ENCODE measurements at regions of chr5 and their contacts with region 1.

Region 1: GRCh38 chr5:169583424-169584204 is at the start of gene SPDL1:
- DNase-seq: peak; percentile 86 to 95 (median 93)
- ATAC-seq: peak; percentile 97
- H3K4me3 ChIP-seq: peak within 1 kb of the TSS; percentile 93
- H3K4me3 Mint-ChIP-seq: peak within 1 kb of the TSS; percentile 93 to 99 (median 98)
- H3K27ac ChIP-seq: peak within 1 kb of the TSS; percentile 83
- H3K27ac Mint-ChIP-seq: peak within 1 kb of the TSS; percentile 86 to 97 (median 91)
- H3K4me1 ChIP-seq: peaks cover 6% of the 10 kb centered on the region in 2 donors
- H3K4me1 Mint-ChIP-seq: peaks cover 9 to 47% (median 40%) of the 10 kb centered on the region in 7 donors
- H3K27me3 ChIP-seq: no peaks in the 10 kb centered on the region
- H3K27me3 Mint-ChIP-seq: peaks cover 0 to 15% (median 0%) of the 10 kb centered on the region in 5 donors
- total RNA-seq, gene SPDL1: 9.9 to 27.2 (median 13.6) TPM

Region 2: GRCh38 chr5:168268949-168269943 is 1314.4 kb before region 1 on chr5:
- CTCF ChIA-PET with region 1: no interaction called
- POLR2A ChIA-PET with region 1: no interaction called
- intact Hi-C with region 1: loop called (anchors 1 to 5 kb)
- DNase-seq: peak; percentile 11 to 74 (median 40)
- ATAC-seq: peak; percentile 85
- H3K4me3 ChIP-seq: no peak overlapping the region
- H3K4me3 Mint-ChIP-seq: peak overlapping the region in 9 of 10 donors; percentile 34 to 82 (median 55)
- H3K27ac ChIP-seq: no peak overlapping the region
- H3K27ac Mint-ChIP-seq: no peak overlapping the region
- H3K4me1 ChIP-seq: peaks cover 0 to 7% of the 10 kb centered on the region in 2 donors
- H3K4me1 Mint-ChIP-seq: peaks cover 6 to 15% (median 10%) of the 10 kb centered on the region in 7 donors
- H3K27me3 ChIP-seq: no peaks in the 10 kb centered on the region
- H3K27me3 Mint-ChIP-seq: peaks cover 0 to 21% (median 15%) of the 10 kb centered on the region in 5 donors

Region 3: GRCh38 chr5:168464214-168464613 is 1119.4 kb before region 1 on chr5:
- CTCF ChIA-PET with region 1: no interaction called
- POLR2A ChIA-PET with region 1: no interaction called
- intact Hi-C with region 1: no loop called
- DNase-seq: no peak
- ATAC-seq: no peak
- H3K4me3 ChIP-seq: no peak overlapping the region
- H3K4me3 Mint-ChIP-seq: no peak overlapping the region
- H3K27ac ChIP-seq: no peak overlapping the region
- H3K27ac Mint-ChIP-seq: no peak overlapping the region
- H3K4me1 ChIP-seq: no peaks in the 10 kb centered on the region
- H3K4me1 Mint-ChIP-seq: peaks cover 0 to 6% (median 0%) of the 10 kb centered on the region in 7 donors
- H3K27me3 ChIP-seq: no peaks in the 10 kb centered on the region
- H3K27me3 Mint-ChIP-seq: no peaks in the 10 kb centered on the region

Region 4: DNA sequence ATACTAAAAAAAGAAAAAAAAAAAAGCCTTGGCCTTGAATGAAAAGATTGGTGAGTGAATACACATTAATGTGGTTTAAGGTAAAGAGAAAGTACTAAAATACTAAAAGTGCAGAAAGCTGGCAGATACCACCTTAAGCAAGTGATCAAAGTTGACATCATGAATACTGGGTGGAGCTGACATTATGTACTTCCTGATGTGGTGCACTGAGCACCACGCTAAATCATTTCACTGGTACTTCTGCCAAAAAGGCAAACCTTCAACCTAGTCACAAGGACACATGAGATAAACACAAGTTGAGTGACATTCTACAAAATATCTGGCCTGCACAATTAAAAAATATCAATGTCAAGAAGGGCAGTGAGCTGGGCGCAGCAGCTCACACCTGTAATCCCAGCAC is 970.6 kb before region 1 on chr5:
- CTCF ChIA-PET with region 1: no interaction called
- POLR2A ChIA-PET with region 1: no interaction called
- intact Hi-C with region 1: loop called in 1 of 2 experiments (anchors 1 kb)
- DNase-seq: peak in 7 of 9 donors; percentile 25 to 61 (median 55)
- ATAC-seq: peak; percentile 98
- H3K4me3 ChIP-seq: peak overlapping the region; percentile 19
- H3K4me3 Mint-ChIP-seq: peak overlapping the region in 8 of 10 donors; percentile 33 to 83 (median 68)
- H3K27ac ChIP-seq: peak overlapping the region; percentile 47
- H3K27ac Mint-ChIP-seq: peak overlapping the region in 8 of 9 donors; percentile 62 to 89 (median 84)
- H3K4me1 ChIP-seq: peaks cover 4 to 9% of the 10 kb centered on the region in 2 donors
- H3K4me1 Mint-ChIP-seq: peaks cover 8 to 20% (median 16%) of the 10 kb centered on the region in 7 donors
- H3K27me3 ChIP-seq: no peaks in the 10 kb centered on the region
- H3K27me3 Mint-ChIP-seq: no peaks in the 10 kb centered on the region

Region 5: GRCh38 chr5:168947212-168947868 is 636.3 kb before region 1 on chr5:
- CTCF ChIA-PET with region 1: no interaction called
- POLR2A ChIA-PET with region 1: no interaction called
- intact Hi-C with region 1: loop called in 1 of 2 experiments (anchors 1 kb)
- DNase-seq: peak in 3 of 9 donors; percentile 4 to 40 (median 9)
- ATAC-seq: peak; percentile 27
- H3K4me3 ChIP-seq: no peak overlapping the region
- H3K4me3 Mint-ChIP-seq: no peak overlapping the region
- H3K27ac ChIP-seq: no peak overlapping the region
- H3K27ac Mint-ChIP-seq: no peak overlapping the region
- H3K4me1 ChIP-seq: no peaks in the 10 kb centered on the region
- H3K4me1 Mint-ChIP-seq: peaks cover 0 to 6% (median 0%) of the 10 kb centered on the region in 7 donors
- H3K27me3 ChIP-seq: no peaks in the 10 kb centered on the region
- H3K27me3 Mint-ChIP-seq: peaks cover 0 to 6% (median 0%) of the 10 kb centered on the region in 5 donors

Region 6: GRCh38 chr5:169637085-169637548 is 53.5 kb after region 1 on chr5 and contains the start of gene DOCK2:
- CTCF ChIA-PET with region 1: no interaction called
- POLR2A ChIA-PET with region 1: interaction called, 17 read pairs
- intact Hi-C with region 1: loop called (anchors 1 kb)
- DNase-seq: peak; percentile 54 to 72 (median 62)
- ATAC-seq: peak; percentile 88
- H3K4me3 ChIP-seq: peak within 1 kb of the TSS; percentile 97
- H3K4me3 Mint-ChIP-seq: peak within 1 kb of the TSS; percentile 91 to 95 (median 94)
- H3K27ac ChIP-seq: peak within 1 kb of the TSS; percentile 75
- H3K27ac Mint-ChIP-seq: peak within 1 kb of the TSS; percentile 88 to 98 (median 94)
- H3K4me1 ChIP-seq: peaks cover 19 to 38% of the 10 kb centered on the region in 2 donors
- H3K4me1 Mint-ChIP-seq: peaks cover 38 to 56% (median 48%) of the 10 kb centered on the region in 7 donors
- H3K27me3 ChIP-seq: no peaks in the 10 kb centered on the region
- H3K27me3 Mint-ChIP-seq: peaks cover 0 to 6% (median 0%) of the 10 kb centered on the region in 5 donors
- total RNA-seq, gene DOCK2: 182 to 345 (median 235) TPM

Region 7: GRCh38 chr5:170267431-170268152 is 684.0 kb after region 1 on chr5:
- CTCF ChIA-PET with region 1: no interaction called
- POLR2A ChIA-PET with region 1: no interaction called
- intact Hi-C with region 1: loop called in 1 of 2 experiments (anchors 10 kb)
- DNase-seq: peak; percentile 62 to 82 (median 77)
- ATAC-seq: peak; percentile 75
- H3K4me3 ChIP-seq: no peak overlapping the region
- H3K4me3 Mint-ChIP-seq: peak overlapping the region; percentile 63 to 81 (median 73)
- H3K27ac ChIP-seq: peak overlapping the region; percentile 66
- H3K27ac Mint-ChIP-seq: peak overlapping the region; percentile 81 to 98 (median 93)
- H3K4me1 ChIP-seq: peaks cover 69 to 75% of the 10 kb centered on the region in 2 donors
- H3K4me1 Mint-ChIP-seq: peaks cover 62 to 100% (median 94%) of the 10 kb centered on the region in 7 donors
- H3K27me3 ChIP-seq: no peaks in the 10 kb centered on the region
- H3K27me3 Mint-ChIP-seq: no peaks in the 10 kb centered on the region

Region 8: DNA sequence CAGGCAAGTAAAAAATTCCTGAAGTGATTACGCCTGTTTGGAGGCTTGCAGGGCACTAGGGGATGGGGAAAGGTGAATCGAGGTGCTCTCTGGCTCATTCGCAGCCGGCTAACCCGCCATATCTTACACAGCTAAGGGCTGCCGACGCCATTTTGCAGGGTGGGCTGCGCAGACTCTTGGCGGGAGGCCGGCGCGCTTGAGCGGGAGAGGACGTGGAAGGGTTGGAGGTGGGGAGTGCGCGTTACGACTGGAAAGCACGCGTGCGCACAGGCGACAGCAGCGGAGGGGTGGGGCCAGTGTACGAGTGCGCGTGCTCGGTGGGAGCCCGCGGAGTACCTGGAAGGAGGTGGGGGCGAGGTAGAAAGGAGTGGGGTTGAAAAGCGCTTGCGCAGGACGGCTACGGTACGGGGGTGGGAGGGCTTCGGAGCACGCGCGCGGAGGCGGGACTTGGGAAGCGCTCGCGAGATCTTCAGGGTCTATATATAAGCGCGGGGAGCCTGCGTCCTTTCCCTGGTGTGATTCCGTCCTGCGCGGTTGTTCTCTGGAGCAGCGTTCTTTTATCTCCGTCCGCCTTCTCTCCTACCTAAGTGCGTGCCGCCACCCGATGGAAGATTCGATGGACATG is 1803.8 kb after region 1 on chr5 and contains the start of gene NPM1:
- CTCF ChIA-PET with region 1: no interaction called
- POLR2A ChIA-PET with region 1: interaction called, 4 read pairs
- intact Hi-C with region 1: loop called in 1 of 2 experiments (anchors 5 kb)
- DNase-seq: peak; percentile 90 to 99 (median 98)
- ATAC-seq: peak; percentile 93
- H3K4me3 ChIP-seq: peak within 1 kb of the TSS; percentile 91
- H3K4me3 Mint-ChIP-seq: peak within 1 kb of the TSS; percentile 92 to 99 (median 98)
- H3K27ac ChIP-seq: peak within 1 kb of the TSS; percentile 88
- H3K27ac Mint-ChIP-seq: peak within 1 kb of the TSS; percentile 96 to 100 (median 98)
- H3K4me1 ChIP-seq: peaks cover 31 to 40% of the 10 kb centered on the region in 2 donors
- H3K4me1 Mint-ChIP-seq: peaks cover 25 to 52% (median 49%) of the 10 kb centered on the region in 7 donors
- H3K27me3 ChIP-seq: no peaks in the 10 kb centered on the region
- H3K27me3 Mint-ChIP-seq: peaks cover 0 to 6% (median 0%) of the 10 kb centered on the region in 5 donors
- total RNA-seq, gene NPM1: 807 to 1,238 (median 1,192) TPM

Measured in naive thymus-derived CD4-positive, alpha-beta T cell (primary cell).